Activated B cell treated with CpG ODN at 0.5 μM for 24 hours (primary cell): ENCODE measurements at regions of chr12 and their contacts with region 1.

Region 1: DNA sequence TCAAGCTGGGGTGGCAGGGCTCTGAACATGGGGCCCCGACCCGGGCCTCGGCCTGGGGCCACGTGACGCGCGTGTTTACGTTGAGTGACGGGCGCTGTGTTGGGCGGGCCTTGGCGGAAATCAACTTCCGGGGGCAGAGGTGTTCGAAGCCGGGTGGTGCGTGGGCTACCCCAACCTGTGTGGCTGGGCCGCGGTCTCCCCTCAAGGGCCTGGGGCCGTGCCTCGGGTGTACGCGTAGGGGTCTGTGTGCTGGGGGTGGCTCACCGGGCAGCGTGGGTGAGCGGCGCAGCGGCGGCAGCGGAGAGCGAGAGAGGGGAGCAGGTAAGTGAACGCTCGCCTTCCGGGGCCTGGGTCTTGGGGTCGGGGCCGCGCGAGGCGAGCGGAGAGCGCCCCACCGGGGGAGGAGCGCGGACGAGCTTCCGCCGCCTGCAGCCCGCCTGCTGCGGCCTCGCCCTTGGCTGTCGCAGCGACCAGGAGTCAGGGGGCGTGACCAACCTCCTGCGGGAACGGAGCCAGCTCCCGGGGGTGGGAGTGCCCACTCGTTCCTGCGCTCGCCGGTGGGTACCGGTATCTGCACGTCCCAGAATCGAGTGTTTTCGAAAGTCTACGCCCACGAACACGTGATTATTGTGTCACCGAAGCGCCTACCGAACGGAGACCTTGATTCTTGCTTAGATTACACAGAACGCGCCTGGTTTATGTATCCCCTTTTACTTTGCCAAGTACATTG is at the start of gene CCDC91:
- DNase-seq: peak; percentile 81
- ATAC-seq: peak; percentile 83
- H3K4me3 Mint-ChIP-seq: peak within 1 kb of the TSS; percentile 97
- H3K27ac Mint-ChIP-seq: peak within 1 kb of the TSS; percentile 98
- H3K4me1 Mint-ChIP-seq: peaks cover 35% of the 10 kb centered on the region
- H3K27me3 Mint-ChIP-seq: no peaks in the 10 kb centered on the region
- CTCF ChIP-seq: no peak
- total RNA-seq, gene CCDC91: 43.6 and 46.3 TPM in 2 replicates

Region 2: DNA sequence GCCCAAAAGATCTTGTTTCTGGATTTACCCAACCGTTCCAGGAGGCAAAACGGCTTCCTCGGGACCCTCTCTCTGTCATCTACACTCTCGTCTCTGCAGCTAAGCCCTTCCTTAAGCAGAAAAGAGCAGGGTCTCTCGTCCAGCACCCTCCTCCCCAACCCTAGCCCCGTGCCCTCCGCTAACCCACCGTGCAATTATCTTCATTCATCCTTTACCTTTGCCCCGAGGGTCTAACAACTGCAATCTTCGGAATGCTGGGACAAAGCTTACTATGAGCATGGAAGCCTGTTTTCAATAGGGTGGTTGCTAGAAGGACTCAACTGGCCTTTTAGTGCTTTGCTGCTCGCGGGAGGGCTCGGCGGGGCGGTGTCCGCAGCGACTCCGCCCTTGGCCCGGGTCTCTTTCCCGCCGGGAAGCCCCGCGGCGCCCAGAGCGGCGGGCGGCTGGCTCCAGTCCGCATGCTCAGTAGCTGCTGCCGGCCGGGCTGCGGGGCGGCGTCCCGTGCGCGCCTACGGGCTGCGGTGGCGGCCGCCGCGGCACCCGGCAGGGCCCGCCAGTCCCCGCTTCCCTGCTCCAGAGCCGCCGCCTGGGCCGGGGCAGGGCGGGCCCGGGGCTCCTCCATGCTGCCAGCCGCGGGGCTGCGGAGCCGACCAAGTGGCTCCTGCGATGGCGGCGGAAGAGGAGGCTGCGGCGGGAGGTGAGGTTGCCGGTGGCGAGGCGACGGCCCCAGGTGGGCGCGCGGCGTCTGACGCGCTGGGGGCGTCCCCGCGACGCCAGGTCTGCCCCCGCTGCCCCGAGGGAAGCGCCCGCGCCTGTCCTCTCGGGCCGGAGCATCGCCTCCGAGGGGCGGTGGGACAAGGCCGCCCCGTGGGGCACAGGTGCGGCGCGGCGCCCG is 857.8 kb before region 1 on chr12 and contains the start of gene BMAL2:
- CTCF ChIA-PET with region 1: no interaction called
- POLR2A ChIA-PET with region 1: no interaction called
- intact Hi-C with region 1: loop called (anchors 10 kb)
- DNase-seq: peak; percentile 46
- ATAC-seq: peak; percentile 60
- H3K4me3 Mint-ChIP-seq: peak within 1 kb of the TSS; percentile 89
- H3K27ac Mint-ChIP-seq: no peak within 1 kb of the TSS
- H3K4me1 Mint-ChIP-seq: peaks cover 25% of the 10 kb centered on the region
- H3K27me3 Mint-ChIP-seq: peaks cover 24% of the 10 kb centered on the region
- CTCF ChIP-seq: no peak
- total RNA-seq, gene BMAL2: 4.2 and 5.4 TPM in 2 replicates

Region 3: GRCh38 chr12:27779920-27780611 is 410.4 kb before region 1 on chr12 and contains the starts of genes KLHL42 and MANSC4:
- CTCF ChIA-PET with region 1: no interaction called
- POLR2A ChIA-PET with region 1: interaction called, 5 read pairs
- intact Hi-C with region 1: loop called (anchors 5 kb)
- DNase-seq: peak; percentile 67
- ATAC-seq: peak; percentile 84
- H3K4me3 Mint-ChIP-seq: peak within 1 kb of the TSS; percentile 89
- H3K27ac Mint-ChIP-seq: peak within 1 kb of the TSS; percentile 87
- H3K4me1 Mint-ChIP-seq: peaks cover 28% of the 10 kb centered on the region
- H3K27me3 Mint-ChIP-seq: no peaks in the 10 kb centered on the region
- CTCF ChIP-seq: no peak
- total RNA-seq, gene KLHL42: 15.9 and 19.3 TPM in 2 replicates
- total RNA-seq, gene MANSC4: not detected in 2 replicates

Region 4: GRCh38 chr12:28172434-28173030 is 18.0 kb before region 1 on chr12:
- CTCF ChIA-PET with region 1: no interaction called
- POLR2A ChIA-PET with region 1: no interaction called
- intact Hi-C with region 1: no loop called
- DNase-seq: no peak
- ATAC-seq: no peak
- H3K4me3 Mint-ChIP-seq: no peak overlapping the region
- H3K27ac Mint-ChIP-seq: no peak overlapping the region
- H3K4me1 Mint-ChIP-seq: no peaks in the 10 kb centered on the region
- H3K27me3 Mint-ChIP-seq: no peaks in the 10 kb centered on the region
- CTCF ChIP-seq: no peak

Region 5: DNA sequence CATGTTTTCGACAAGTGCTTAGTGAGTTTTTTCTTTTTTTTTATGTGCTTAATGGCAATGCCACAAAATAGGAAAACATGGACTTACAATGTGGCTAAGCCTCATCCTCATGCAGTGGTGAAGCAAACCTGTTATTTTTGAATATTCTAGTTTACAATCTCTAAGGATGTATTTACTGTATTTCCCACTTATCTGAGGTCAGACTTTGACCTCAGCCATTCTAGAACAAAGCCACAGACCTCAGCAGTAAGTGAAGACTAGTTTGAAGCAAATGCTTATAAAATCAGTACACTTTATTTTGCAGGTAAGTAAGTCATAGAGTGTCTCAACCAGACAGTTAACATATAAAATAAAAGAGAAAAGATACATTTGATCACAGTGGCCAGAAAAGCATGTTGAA is 129.9 kb after region 1 on chr12:
- CTCF ChIA-PET with region 1: no interaction called
- POLR2A ChIA-PET with region 1: no interaction called
- intact Hi-C with region 1: loop called (anchors 5 kb)
- DNase-seq: no peak
- ATAC-seq: no peak
- H3K4me3 Mint-ChIP-seq: no peak overlapping the region
- H3K27ac Mint-ChIP-seq: no peak overlapping the region
- H3K4me1 Mint-ChIP-seq: no peaks in the 10 kb centered on the region
- H3K27me3 Mint-ChIP-seq: no peaks in the 10 kb centered on the region
- CTCF ChIP-seq: no peak